Right ventricle myocardium inferior (tissue), 1 donor: ENCODE measurements at regions of chr4 and their contacts with region 1.

Region 1: GRCh38 chr4:122259849-122260248 is 107.7 kb downstream of the BLTP1 start:
- DNase-seq: no peak
- ATAC-seq: no peak

Region 2: DNA sequence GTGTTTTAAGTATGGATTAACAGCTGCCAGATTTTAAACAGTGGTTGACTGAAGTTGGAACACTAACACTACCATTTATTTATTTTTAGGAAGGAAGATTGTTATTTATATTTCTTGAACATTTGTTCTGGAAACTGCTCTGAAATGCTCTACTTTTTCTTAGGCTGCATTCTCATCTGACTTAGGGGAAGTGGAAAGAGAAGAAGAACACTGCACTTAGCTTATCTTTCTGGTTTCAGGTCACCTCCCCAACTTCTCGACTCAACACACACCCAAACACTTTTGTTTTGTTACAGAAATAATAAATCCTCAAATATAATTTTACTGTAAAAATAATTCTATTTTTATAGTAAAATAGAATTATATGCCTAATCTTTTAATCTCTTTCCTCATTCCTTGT is 89.1 kb before region 1 on chr4:
- intact Hi-C with region 1: no loop called
- DNase-seq: no peak
- ATAC-seq: no peak

Region 3: GRCh38 chr4:122212880-122213279 is 47.0 kb before region 1 on chr4:
- intact Hi-C with region 1: loop called (anchors 5 kb)
- DNase-seq: no peak
- ATAC-seq: no peak